ENCODE measurements at regions of chr14 and their contacts with region 1.

Region 1: DNA sequence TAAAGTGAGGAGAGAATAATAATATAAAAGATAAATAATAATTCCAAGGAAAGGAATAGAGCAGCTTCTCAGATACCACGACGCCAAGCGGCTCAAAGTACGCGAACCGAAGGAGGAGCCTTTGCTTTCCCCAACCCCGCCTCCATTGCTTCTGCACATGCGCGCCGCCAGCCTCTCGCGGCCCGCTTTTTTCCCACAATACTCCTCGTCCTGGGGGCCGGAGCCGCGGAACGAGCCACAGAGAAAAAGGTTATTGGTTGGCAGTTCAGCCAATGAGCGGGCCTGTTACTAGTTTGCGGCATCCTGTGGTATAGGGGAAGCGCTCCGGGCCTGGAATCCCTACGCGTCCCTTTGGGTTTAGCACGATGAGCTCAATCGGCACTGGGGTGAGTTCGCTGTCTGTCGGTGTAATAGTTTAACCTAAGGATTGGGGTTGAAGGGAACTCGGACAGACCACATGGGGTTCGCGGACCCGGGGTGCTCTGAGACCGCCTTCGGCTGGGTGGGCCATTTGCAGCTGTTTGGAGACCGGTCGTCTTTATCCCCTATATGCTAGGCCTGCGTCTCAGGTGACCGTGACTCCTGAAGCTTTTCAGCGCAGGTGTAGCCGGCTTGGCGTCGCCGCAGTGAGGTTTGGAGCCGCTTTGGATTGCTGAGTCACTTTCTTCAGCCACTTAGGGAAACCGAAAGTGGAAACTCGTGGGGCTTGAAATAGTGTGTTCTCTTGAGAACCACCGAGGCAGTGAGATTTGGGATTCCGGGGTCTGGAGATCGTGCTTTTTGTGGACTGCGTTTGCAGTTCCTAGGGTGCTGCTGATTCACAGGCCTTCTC is at the start of gene PSMA3:
- DNase-seq: peak; percentile 99
- H3K4me3 Mint-ChIP-seq: peak within 1 kb of the TSS; percentile 93
- H3K27ac Mint-ChIP-seq: peak within 1 kb of the TSS; percentile 99
- H3K4me1 Mint-ChIP-seq: peaks cover 40% of the 10 kb centered on the region
- H3K27me3 Mint-ChIP-seq: no peaks in the 10 kb centered on the region
- total RNA-seq, gene PSMA3: 474 and 479 TPM in 2 replicates

Region 2: GRCh38 chr14:57390028-57390805 is 854.6 kb before region 1 on chr14 and contains the start of gene NAA30:
- intact Hi-C with region 1: loop called (anchors 5 kb)
- DNase-seq: peak; percentile 97
- H3K4me3 Mint-ChIP-seq: peak within 1 kb of the TSS; percentile 93
- H3K27ac Mint-ChIP-seq: peak within 1 kb of the TSS; percentile 93
- H3K4me1 Mint-ChIP-seq: peaks cover 39% of the 10 kb centered on the region
- H3K27me3 Mint-ChIP-seq: no peaks in the 10 kb centered on the region
- total RNA-seq, gene NAA30: 20.4 and 20.7 TPM in 2 replicates

Region 3: GRCh38 chr14:58014778-58015177 is 230.0 kb before region 1 on chr14:
- intact Hi-C with region 1: no loop called
- DNase-seq: no peak
- H3K4me3 Mint-ChIP-seq: no peak overlapping the region
- H3K27ac Mint-ChIP-seq: no peak overlapping the region
- H3K4me1 Mint-ChIP-seq: no peaks in the 10 kb centered on the region
- H3K27me3 Mint-ChIP-seq: no peaks in the 10 kb centered on the region

Region 4: GRCh38 chr14:58199726-58200479 is 44.9 kb before region 1 on chr14 and contains the start of gene ACTR10:
- intact Hi-C with region 1: loop called (anchors 1 kb)
- DNase-seq: peak; percentile 96
- H3K4me3 Mint-ChIP-seq: peak within 1 kb of the TSS; percentile 95
- H3K27ac Mint-ChIP-seq: peak within 1 kb of the TSS; percentile 94
- H3K4me1 Mint-ChIP-seq: peaks cover 17% of the 10 kb centered on the region
- H3K27me3 Mint-ChIP-seq: peaks cover 4% of the 10 kb centered on the region
- total RNA-seq, gene ACTR10: 38.7 and 40.5 TPM in 2 replicates

Region 5: DNA sequence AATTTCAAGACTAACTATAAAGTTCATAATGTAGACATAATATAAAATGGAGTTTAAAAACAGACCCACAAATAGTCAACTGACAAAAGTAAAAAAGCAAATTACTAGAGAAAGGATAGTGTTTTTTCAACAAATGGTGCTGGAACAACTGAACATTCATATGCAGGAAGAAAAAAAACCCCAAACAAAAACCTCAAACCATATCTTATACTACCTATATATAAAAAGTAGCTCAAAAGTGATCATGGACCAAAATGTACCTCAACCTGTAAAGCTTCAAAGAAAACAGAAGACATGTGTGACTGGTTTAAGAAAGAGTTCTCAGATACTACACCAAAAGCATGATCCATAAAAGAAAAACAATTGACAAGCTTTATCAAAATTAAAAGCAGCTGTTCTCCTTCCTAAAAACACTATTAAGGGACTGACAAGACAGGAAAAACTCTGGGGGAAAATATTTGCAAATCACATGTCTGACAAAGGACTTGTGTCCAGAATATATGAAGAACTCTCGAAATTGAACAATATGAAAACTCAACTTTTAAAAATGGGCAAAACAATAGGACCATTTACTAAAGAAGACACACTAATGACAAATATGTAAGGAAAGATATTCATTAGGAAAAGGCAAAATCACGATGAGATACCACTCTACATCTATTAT is 30.9 kb after region 1 on chr14:
- intact Hi-C with region 1: loop called (anchors 2 kb)
- DNase-seq: no peak
- H3K4me3 Mint-ChIP-seq: peak overlapping the region; percentile 29
- H3K27ac Mint-ChIP-seq: peak overlapping the region; percentile 89
- H3K4me1 Mint-ChIP-seq: peaks cover 32% of the 10 kb centered on the region
- H3K27me3 Mint-ChIP-seq: no peaks in the 10 kb centered on the region

Region 6: GRCh38 chr14:58280954-58281787 is 36.4 kb after region 1 on chr14:
- intact Hi-C with region 1: loop called (anchors 2 kb)
- DNase-seq: peak; percentile 75
- H3K4me3 Mint-ChIP-seq: peak overlapping the region; percentile 69
- H3K27ac Mint-ChIP-seq: peak overlapping the region; percentile 96
- H3K4me1 Mint-ChIP-seq: peaks cover 51% of the 10 kb centered on the region
- H3K27me3 Mint-ChIP-seq: no peaks in the 10 kb centered on the region

Region 7: GRCh38 chr14:58297762-58298476 is 53.1 kb after region 1 on chr14:
- intact Hi-C with region 1: loop called (anchors 1 kb)
- DNase-seq: peak; percentile 99
- H3K4me3 Mint-ChIP-seq: no peak overlapping the region
- H3K27ac Mint-ChIP-seq: no peak overlapping the region
- H3K4me1 Mint-ChIP-seq: peaks cover 20% of the 10 kb centered on the region
- H3K27me3 Mint-ChIP-seq: no peaks in the 10 kb centered on the region

Region 8: DNA sequence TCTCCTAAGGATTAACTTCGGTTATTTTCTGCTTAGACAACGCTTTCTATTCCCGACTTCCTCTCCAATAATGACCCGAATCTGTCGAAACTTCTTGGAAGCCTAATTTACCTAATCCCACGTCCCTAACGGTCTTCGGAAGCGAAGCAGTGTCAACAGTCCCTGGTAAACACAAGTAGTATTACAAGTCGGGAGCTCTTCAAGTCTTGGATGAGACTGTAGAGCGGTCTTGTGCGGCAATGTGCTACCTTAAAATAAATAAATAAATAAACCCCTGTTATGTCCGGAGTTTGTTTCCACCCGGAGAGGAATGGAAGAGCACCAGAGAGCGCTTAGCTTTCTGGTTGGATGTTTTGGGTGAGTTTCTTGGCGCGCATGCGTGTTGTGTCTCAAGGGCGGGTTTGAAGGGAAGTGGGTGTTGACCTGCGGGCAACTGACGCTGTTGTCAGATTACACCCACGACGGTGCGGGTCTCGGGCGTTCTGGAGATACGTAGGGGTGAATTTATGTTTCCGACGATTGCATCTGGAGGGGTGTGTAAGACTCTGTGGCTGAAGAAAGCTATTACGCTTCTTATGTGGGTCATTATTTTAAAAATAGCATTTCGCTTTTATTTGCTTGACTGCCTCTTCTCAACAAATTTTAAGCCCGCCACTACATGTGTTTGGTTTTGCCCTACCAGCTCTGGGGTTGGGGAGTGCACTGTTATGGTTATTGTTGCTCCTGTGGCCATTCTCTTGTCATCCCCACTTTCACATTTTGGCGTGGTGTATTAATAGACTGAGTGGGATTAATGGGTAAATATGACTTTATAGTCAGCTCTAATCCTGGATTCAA is 182.7 kb after region 1 on chr14 and contains the starts of genes KIAA0586 and TIMM9:
- intact Hi-C with region 1: loop called (anchors 1 kb)
- DNase-seq: peak; percentile 98
- H3K4me3 Mint-ChIP-seq: peak within 1 kb of the TSS; percentile 79
- H3K27ac Mint-ChIP-seq: peak within 1 kb of the TSS; percentile 94
- H3K4me1 Mint-ChIP-seq: peaks cover 31% of the 10 kb centered on the region
- H3K27me3 Mint-ChIP-seq: peaks cover 2% of the 10 kb centered on the region
- total RNA-seq, gene KIAA0586: 19.8 and 20.9 TPM in 2 replicates
- total RNA-seq, gene TIMM9: 67.7 and 71.8 TPM in 2 replicates

Measured in activated CD4-positive, alpha-beta T cell treated with anti-CD3 and anti-CD28 coated beads, Interleukin-2, amount 10 ng/mL, durations not matched to agents 24 days and 14 days (primary cell).